Caco-2 (cell line): ENCODE measurements at regions of chr4 and their contacts with region 1.

Region 1: GRCh38 chr4:28225050-28225449 is 1364.4 kb downstream of the STIM2 start:
- DNase-seq: peak; percentile 55 to 63
- H3K4me3 ChIP-seq: no peak overlapping the region
- H3K4me3 Mint-ChIP-seq: no peak overlapping the region
- H3K27ac Mint-ChIP-seq: no peak overlapping the region
- H3K4me1 ChIP-seq: peaks cover 17% of the 10 kb centered on the region; the same call in 1 of the 2 replicates
- H3K4me1 Mint-ChIP-seq: peaks cover 9% of the 10 kb centered on the region
- H3K27me3 ChIP-seq: no peaks in the 10 kb centered on the region
- H3K27me3 Mint-ChIP-seq: no peaks in the 10 kb centered on the region
- CTCF ChIP-seq: peak; percentile 51 to 56

Region 2: GRCh38 chr4:27577951-27578350 is 647.1 kb before region 1 on chr4:
- CTCF ChIA-PET with region 1: no interaction called
- POLR2A ChIA-PET with region 1: no interaction called
- intact Hi-C with region 1: no loop called
- DNase-seq: no peak
- H3K4me3 ChIP-seq: no peak overlapping the region
- H3K4me3 Mint-ChIP-seq: no peak overlapping the region
- H3K27ac Mint-ChIP-seq: no peak overlapping the region
- H3K4me1 ChIP-seq: no peaks in the 10 kb centered on the region
- H3K4me1 Mint-ChIP-seq: no peaks in the 10 kb centered on the region
- H3K27me3 ChIP-seq: no peaks in the 10 kb centered on the region
- H3K27me3 Mint-ChIP-seq: peaks cover 3% of the 10 kb centered on the region
- CTCF ChIP-seq: no peak

Region 3: DNA sequence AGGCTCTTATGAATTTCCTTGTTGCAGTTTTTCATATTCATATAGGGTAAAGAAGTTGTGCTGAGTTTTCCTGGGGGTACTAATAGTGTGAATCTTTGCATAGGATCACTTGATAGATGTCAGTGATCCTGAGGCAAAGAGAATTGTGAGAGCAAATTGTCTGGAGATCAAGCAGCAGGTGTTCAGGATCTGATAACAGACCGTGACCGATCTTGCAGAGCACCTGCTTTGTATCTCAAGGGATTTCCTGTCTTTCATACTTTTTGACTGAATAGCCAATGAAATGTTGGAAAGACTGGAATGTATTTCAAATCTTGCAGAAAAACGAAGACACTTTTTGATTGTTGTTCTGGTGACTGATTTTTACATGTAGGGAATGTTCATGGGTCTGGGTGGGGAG is 449.9 kb before region 1 on chr4:
- CTCF ChIA-PET with region 1: no interaction called
- POLR2A ChIA-PET with region 1: no interaction called
- intact Hi-C with region 1: no loop called
- DNase-seq: no peak
- H3K4me3 ChIP-seq: no peak overlapping the region
- H3K4me3 Mint-ChIP-seq: no peak overlapping the region
- H3K27ac Mint-ChIP-seq: no peak overlapping the region
- H3K4me1 ChIP-seq: no peaks in the 10 kb centered on the region
- H3K4me1 Mint-ChIP-seq: no peaks in the 10 kb centered on the region
- H3K27me3 ChIP-seq: no peaks in the 10 kb centered on the region
- H3K27me3 Mint-ChIP-seq: peaks cover 2% of the 10 kb centered on the region
- CTCF ChIP-seq: no peak

Region 4: GRCh38 chr4:27861381-27862201 is 363.5 kb before region 1 on chr4:
- CTCF ChIA-PET with region 1: no interaction called
- POLR2A ChIA-PET with region 1: no interaction called
- intact Hi-C with region 1: loop called (anchors 1 kb)
- DNase-seq: peak in 1 of 2 experiments; percentile 30
- H3K4me3 ChIP-seq: no peak overlapping the region
- H3K4me3 Mint-ChIP-seq: no peak overlapping the region
- H3K27ac Mint-ChIP-seq: no peak overlapping the region
- H3K4me1 ChIP-seq: no peaks in the 10 kb centered on the region
- H3K4me1 Mint-ChIP-seq: no peaks in the 10 kb centered on the region
- H3K27me3 ChIP-seq: no peaks in the 10 kb centered on the region
- H3K27me3 Mint-ChIP-seq: peaks cover 3% of the 10 kb centered on the region
- CTCF ChIP-seq: peak; percentile 41 to 44

Region 5: GRCh38 chr4:28357990-28358389 is 132.9 kb after region 1 on chr4:
- CTCF ChIA-PET with region 1: no interaction called
- POLR2A ChIA-PET with region 1: no interaction called
- intact Hi-C with region 1: loop called (anchors 1 kb)
- DNase-seq: peak; percentile 38 to 43
- H3K4me3 ChIP-seq: no peak overlapping the region
- H3K4me3 Mint-ChIP-seq: no peak overlapping the region
- H3K27ac Mint-ChIP-seq: no peak overlapping the region
- H3K4me1 ChIP-seq: no peaks in the 10 kb centered on the region
- H3K4me1 Mint-ChIP-seq: no peaks in the 10 kb centered on the region
- H3K27me3 ChIP-seq: no peaks in the 10 kb centered on the region
- H3K27me3 Mint-ChIP-seq: no peaks in the 10 kb centered on the region
- CTCF ChIP-seq: peak in 1 of 2 experiments; percentile 41

Region 6: GRCh38 chr4:28435314-28435713 is 210.3 kb after region 1 on chr4:
- CTCF ChIA-PET with region 1: interaction called, 4 read pairs
- POLR2A ChIA-PET with region 1: no interaction called
- intact Hi-C with region 1: loop called (anchors 5 kb)
- DNase-seq: peak in 1 of 2 experiments; percentile 2
- H3K4me3 ChIP-seq: no peak overlapping the region
- H3K4me3 Mint-ChIP-seq: peak overlapping the region; percentile 67
- H3K27ac Mint-ChIP-seq: peak overlapping the region; percentile 94
- H3K4me1 ChIP-seq: peaks cover 55% of the 10 kb centered on the region
- H3K4me1 Mint-ChIP-seq: peaks cover 27% of the 10 kb centered on the region
- H3K27me3 ChIP-seq: no peaks in the 10 kb centered on the region
- H3K27me3 Mint-ChIP-seq: no peaks in the 10 kb centered on the region
- CTCF ChIP-seq: no peak

Region 7: GRCh38 chr4:28686618-28687017 is 461.6 kb after region 1 on chr4:
- CTCF ChIA-PET with region 1: no interaction called
- POLR2A ChIA-PET with region 1: no interaction called
- intact Hi-C with region 1: loop called (anchors 5 kb)
- DNase-seq: peak; percentile 46 to 60
- H3K4me3 ChIP-seq: no peak overlapping the region
- H3K4me3 Mint-ChIP-seq: no peak overlapping the region
- H3K27ac Mint-ChIP-seq: no peak overlapping the region
- H3K4me1 ChIP-seq: no peaks in the 10 kb centered on the region
- H3K4me1 Mint-ChIP-seq: no peaks in the 10 kb centered on the region
- H3K27me3 ChIP-seq: no peaks in the 10 kb centered on the region
- H3K27me3 Mint-ChIP-seq: peaks cover 2% of the 10 kb centered on the region
- CTCF ChIP-seq: peak; percentile 27 to 64

Region 8: GRCh38 chr4:29131304-29131703 is 906.3 kb after region 1 on chr4:
- CTCF ChIA-PET with region 1: no interaction called
- POLR2A ChIA-PET with region 1: no interaction called
- intact Hi-C with region 1: loop called (anchors 1 kb)
- DNase-seq: no peak
- H3K4me3 ChIP-seq: no peak overlapping the region
- H3K4me3 Mint-ChIP-seq: no peak overlapping the region
- H3K27ac Mint-ChIP-seq: no peak overlapping the region
- H3K4me1 ChIP-seq: no peaks in the 10 kb centered on the region
- H3K4me1 Mint-ChIP-seq: no peaks in the 10 kb centered on the region
- H3K27me3 ChIP-seq: no peaks in the 10 kb centered on the region
- H3K27me3 Mint-ChIP-seq: peaks cover 4% of the 10 kb centered on the region
- CTCF ChIP-seq: no peak